ENCODE measurements at regions of chr5 and their contacts with region 1.

Region 1: DNA sequence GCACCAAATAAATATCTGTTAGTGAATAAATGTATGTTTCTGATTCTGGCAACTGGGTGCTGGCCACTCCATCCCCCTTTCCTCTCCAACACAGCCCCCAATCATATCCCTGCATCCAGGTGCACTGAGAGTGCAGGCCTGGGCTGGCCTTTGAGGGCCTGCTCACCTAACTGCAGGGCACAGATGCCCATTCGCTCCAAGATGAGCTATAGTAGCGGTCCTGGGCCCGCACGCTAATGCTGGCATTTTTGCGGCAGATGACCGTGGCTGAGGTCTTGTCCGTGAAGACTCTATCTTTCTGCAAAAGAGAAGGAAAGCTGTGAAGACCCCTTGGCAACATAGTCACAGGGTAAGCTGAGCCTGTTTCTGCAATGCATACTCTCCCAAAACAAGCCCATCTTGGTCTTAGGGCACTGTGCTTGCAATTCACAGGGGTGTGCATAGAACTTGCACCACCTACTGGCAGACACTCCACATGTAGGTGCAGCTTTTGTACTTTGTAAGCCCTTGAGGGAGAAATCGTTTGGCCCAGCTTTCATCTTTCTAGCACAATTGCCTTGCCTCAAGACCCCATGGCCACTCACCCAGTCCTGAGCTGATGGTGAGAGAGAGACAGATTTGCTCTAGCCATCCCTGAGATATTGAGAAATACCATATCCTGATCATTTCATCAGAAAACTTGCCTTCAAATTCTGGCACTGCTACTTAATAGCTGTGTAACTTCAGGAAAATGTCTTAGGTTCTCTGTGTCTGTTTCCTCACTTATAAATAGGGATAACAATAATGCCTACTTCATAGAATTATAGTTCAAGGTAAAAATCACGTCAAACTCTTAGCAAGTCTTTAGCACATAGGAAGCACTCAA is 13.5 kb downstream of the IL12B start:
- DNase-seq: peak; percentile 32
- H3K4me3 ChIP-seq: no peak overlapping the region
- H3K27ac ChIP-seq: no peak overlapping the region
- H3K27me3 ChIP-seq: no peaks in the 10 kb centered on the region
- CTCF ChIP-seq: peak; percentile 78

Region 2: DNA sequence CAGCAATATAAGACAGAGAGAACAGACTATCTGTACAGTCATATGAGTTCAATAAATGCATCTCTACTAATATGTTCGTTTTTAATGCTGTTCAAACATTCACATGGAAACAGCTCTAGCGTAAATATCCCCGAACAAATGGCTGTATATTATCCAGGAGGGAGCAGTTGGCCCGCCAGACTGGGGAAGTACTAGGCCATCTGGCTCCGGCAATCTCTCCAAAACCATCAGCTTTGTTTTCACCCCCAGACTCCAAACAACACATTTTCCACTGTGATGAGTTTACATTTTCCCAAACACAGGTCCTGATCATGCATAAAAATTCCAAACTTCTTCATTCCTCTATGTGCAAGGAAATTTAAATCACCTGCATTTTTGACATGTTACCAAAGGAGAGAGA is 225.7 kb before region 1 on chr5:
- CTCF ChIA-PET with region 1: no interaction called
- POLR2A ChIA-PET with region 1: no interaction called
- DNase-seq: no peak
- H3K4me3 ChIP-seq: no peak overlapping the region
- H3K27ac ChIP-seq: no peak overlapping the region
- H3K27me3 ChIP-seq: peaks cover 8% of the 10 kb centered on the region
- CTCF ChIP-seq: no peak

Region 3: DNA sequence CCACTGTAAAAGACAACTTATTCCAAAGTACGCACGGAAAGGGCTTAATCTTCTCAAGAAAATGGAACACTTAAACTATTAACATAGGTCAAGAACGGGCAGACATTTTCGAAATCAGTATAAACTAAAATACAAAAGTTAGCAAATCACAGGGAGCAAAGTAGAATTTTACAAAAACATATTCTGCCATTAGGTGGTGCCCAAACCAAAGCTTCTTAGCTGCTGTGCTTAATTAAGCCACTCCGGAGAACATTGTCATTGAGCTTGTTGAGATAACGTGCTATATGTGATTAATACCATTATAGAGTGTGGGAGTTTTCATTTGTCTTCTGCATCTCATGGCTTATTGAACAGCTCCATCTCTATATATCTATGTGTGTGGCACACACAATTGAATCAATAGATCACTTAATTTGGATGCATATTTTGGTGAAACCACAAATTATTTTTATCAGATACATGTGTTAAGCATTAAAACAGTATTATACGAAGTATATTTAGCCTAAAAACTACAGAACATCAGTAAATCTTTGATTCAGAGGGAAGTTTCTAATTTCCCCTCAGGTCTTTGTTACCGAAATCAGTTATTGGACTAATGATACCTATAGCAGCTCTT is 30.2 kb before region 1 on chr5:
- CTCF ChIA-PET with region 1: interaction called, 16 read pairs
- POLR2A ChIA-PET with region 1: no interaction called
- DNase-seq: no peak
- H3K4me3 ChIP-seq: no peak overlapping the region
- H3K27ac ChIP-seq: no peak overlapping the region
- H3K27me3 ChIP-seq: no peaks in the 10 kb centered on the region
- CTCF ChIP-seq: peak; percentile 52

Region 4: GRCh38 chr5:159362220-159362619 is 45.5 kb after region 1 on chr5:
- CTCF ChIA-PET with region 1: no interaction called
- POLR2A ChIA-PET with region 1: no interaction called
- DNase-seq: no peak
- H3K4me3 ChIP-seq: no peak overlapping the region
- H3K27ac ChIP-seq: no peak overlapping the region
- H3K27me3 ChIP-seq: no peaks in the 10 kb centered on the region
- CTCF ChIP-seq: no peak

Measured in AG04450 (cell line).